Motor neuron (in vitro differentiated cells): ENCODE measurements at regions of chrX and their contacts with region 1.

Region 1: DNA sequence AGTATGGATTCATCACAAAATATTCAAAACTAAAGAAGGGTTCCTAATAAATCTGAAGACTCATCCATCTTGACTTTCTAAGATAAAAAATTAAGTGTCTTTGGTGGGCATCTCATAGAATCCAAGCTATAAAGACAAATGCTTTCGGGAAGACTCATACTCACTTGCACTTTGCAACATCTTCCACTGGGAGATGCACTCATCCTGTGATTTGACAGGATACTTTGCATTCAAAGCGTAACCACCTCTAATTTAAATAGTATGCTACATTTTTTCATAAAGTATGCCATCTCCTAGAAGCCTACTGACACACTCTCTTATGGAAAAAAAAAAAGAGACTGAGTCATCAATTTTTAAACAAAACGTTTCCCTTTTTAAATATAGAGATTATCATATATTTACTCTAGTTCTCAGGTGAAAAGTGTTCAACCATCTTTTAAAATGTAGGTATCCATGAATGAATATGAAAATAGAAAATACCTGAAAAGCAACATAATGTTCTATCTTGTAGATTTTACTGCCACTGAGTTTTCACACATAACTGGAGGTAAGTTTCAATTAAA is 119.6 kb downstream of the KLHL13 start:
- ATAC-seq: peak in 4 of 8 experiments; percentile 16 to 82 (median 41)
- H3K4me3 ChIP-seq: no peak overlapping the region
- H3K27ac ChIP-seq: no peak overlapping the region
- H3K4me1 ChIP-seq: no peaks in the 10 kb centered on the region

Region 2: DNA sequence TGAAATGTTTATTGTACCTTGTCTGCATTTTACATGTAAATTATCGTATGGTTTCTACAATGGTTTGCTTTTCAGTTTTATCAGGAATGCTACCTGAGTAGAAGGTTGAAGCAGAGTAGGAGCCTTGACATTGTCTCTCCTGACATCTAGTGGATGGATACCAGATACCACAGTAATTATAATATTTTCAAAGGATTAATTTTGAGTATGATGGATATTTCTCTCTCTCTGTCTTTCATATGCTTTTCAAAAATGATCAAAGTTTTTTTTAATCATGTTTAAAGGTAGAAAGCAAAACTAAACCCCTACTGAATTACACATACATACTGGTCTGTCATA is 229.1 kb after region 1 on chrX:
- in situ Hi-C with region 1: loop called in 1 of 9 experiments (anchors 25 kb)
- ATAC-seq: peak; percentile 49 to 70 (median 60)
- H3K4me3 ChIP-seq: no peak overlapping the region
- H3K27ac ChIP-seq: no peak overlapping the region
- H3K4me1 ChIP-seq: peaks cover 0 to 15% of the 10 kb centered on the region in 2 donors